Heart right ventricle (tissue), 16 donors: ENCODE measurements at regions of chr19 and their contacts with region 1.

Region 1: GRCh38 chr19:41327576-41328156 is 17.7 kb downstream of the CCDC97 start:
- DNase-seq: peak; percentile 76 to 79
- ATAC-seq: peak; percentile 37 to 65 (median 55)
- H3K4me3 ChIP-seq: peak overlapping the region in 9 of 10 donors; percentile 20 to 49 (median 40)
- H3K27ac ChIP-seq: peak overlapping the region; percentile 67 to 96 (median 88)
- H3K4me1 ChIP-seq: peaks cover 36 to 87% (median 62%) of the 10 kb centered on the region in 9 donors
- H3K27me3 ChIP-seq: no peaks in the 10 kb centered on the region
- CTCF ChIP-seq: peak in 1 of 9 donors; percentile 13

Region 2: GRCh38 chr19:41397086-41398049 is 69.7 kb after region 1 on chr19 and contains the starts of genes BCKDHA and EXOSC5:
- intact Hi-C with region 1: no loop called
- DNase-seq: peak; percentile 99 to 100
- ATAC-seq: peak; percentile 98 to 99 (median 99)
- H3K4me3 ChIP-seq: peak within 1 kb of the TSS; percentile 58 to 96 (median 88)
- H3K27ac ChIP-seq: peak within 1 kb of the TSS; percentile 76 to 95 (median 92)
- H3K4me1 ChIP-seq: peaks cover 14 to 51% (median 36%) of the 10 kb centered on the region in 9 donors
- H3K27me3 ChIP-seq: no peaks in the 10 kb centered on the region
- CTCF ChIP-seq: no peak
- total RNA-seq, gene BCKDHA: 35.5 to 63.0 (median 42.5) TPM
- total RNA-seq, gene EXOSC5: 10.6 to 17.8 (median 13.6) TPM

Region 3: GRCh38 chr19:41570639-41571112 is 243.0 kb after region 1 on chr19:
- intact Hi-C with region 1: loop called in 2 of 10 experiments (anchors 10 kb)
- DNase-seq: peak; percentile 76 to 83
- ATAC-seq: peak; percentile 87 to 97 (median 94)
- H3K4me3 ChIP-seq: no peak overlapping the region
- H3K27ac ChIP-seq: no peak overlapping the region
- H3K4me1 ChIP-seq: peaks cover 0 to 7% (median 0%) of the 10 kb centered on the region in 9 donors
- H3K27me3 ChIP-seq: peaks cover 0 to 59% (median 31%) of the 10 kb centered on the region in 7 donors
- CTCF ChIP-seq: peak; percentile 63 to 93 (median 89)